AG04449 (cell line): ENCODE measurements at regions of chr4 and their contacts with region 1.

Region 1: GRCh38 chr4:94406668-94407437 is 44.9 kb upstream of the PDLIM5 start:
- DNase-seq: no peak
- H3K4me3 ChIP-seq: no peak overlapping the region
- CTCF ChIP-seq: peak; percentile 76

Region 2: GRCh38 chr4:94274912-94275311 is 131.9 kb before region 1 on chr4:
- CTCF ChIA-PET with region 1: no interaction called
- POLR2A ChIA-PET with region 1: no interaction called
- DNase-seq: peak; percentile 23
- H3K4me3 ChIP-seq: no peak overlapping the region
- CTCF ChIP-seq: no peak

Region 3: GRCh38 chr4:94325835-94326234 is 81.0 kb before region 1 on chr4:
- CTCF ChIA-PET with region 1: no interaction called
- POLR2A ChIA-PET with region 1: no interaction called
- DNase-seq: no peak
- H3K4me3 ChIP-seq: no peak overlapping the region
- CTCF ChIP-seq: no peak

Region 4: GRCh38 chr4:94378047-94378446 is 28.8 kb before region 1 on chr4:
- CTCF ChIA-PET with region 1: no interaction called
- POLR2A ChIA-PET with region 1: no interaction called
- DNase-seq: no peak
- H3K4me3 ChIP-seq: no peak overlapping the region
- CTCF ChIP-seq: no peak

Region 5: DNA sequence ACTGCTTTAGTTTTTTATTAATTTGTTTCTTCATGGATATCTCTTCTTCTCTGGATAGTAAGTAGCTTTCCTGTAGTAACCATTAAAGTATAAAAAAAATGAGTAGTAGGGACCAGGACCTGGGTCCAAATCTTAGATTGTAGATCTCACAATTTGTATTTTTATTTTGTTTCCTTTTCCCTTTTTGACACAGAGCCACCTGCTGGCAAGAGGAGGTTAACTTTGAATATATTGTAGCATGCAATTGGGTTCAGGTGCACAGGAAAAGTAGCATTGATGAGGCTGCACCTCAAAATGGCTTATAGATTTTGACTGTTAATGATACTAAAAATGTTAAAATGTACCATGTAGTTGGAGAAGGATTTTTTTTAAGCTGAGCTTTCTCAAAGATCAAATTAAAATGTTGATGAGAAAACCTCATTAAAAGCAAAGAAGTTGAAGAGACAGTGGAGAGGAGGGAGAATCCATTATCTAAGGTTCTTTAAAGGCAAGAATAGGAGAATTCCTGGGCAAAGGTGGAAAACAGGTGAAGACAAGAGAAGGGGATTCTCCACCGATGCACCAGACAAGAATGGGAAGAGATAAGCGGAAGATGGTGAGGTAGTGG is 15.9 kb before region 1 on chr4:
- CTCF ChIA-PET with region 1: interaction called, 19 read pairs
- POLR2A ChIA-PET with region 1: no interaction called
- DNase-seq: no peak
- H3K4me3 ChIP-seq: no peak overlapping the region
- CTCF ChIP-seq: peak; percentile 35

Region 6: GRCh38 chr4:94451695-94452475 is 45.0 kb after region 1 on chr4 and contains the start of gene PDLIM5:
- CTCF ChIA-PET with region 1: interaction called, 19 read pairs
- POLR2A ChIA-PET with region 1: interaction called, 3 read pairs
- DNase-seq: no peak
- H3K4me3 ChIP-seq: peak within 1 kb of the TSS; percentile 88
- CTCF ChIP-seq: no peak

Region 7: DNA sequence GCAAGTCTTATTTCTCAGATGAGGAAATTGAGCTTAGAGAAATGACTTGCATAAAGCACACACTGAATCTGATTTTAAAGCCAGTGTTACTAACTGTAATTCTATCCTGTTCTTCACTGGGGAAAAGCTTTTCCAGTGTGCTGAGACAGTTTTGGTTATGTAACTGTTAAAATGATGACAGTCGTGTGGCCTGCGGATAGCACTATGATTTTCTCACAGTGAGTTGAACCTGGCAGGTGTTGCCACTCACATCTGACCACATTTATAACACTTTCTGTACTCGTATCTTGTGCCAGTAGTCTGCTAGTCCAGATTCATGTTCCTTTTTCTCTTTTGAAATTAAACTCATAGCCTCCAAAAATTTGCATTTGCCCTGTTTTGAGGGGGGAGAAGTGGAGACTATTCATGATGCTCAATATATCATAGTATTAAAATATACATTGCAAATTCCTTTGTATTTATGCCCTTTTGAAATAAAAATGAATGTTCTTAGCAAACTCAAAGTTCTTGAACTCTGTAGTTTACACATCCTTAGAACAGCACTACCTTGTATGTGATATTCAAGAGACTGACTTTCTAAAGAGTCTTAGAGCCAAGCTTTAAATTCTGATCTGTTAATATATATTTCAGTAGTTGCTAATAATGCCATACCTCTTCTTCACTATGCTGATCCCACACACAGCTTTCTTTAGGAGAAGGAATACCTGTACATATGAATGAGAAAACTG is 177.2 kb after region 1 on chr4:
- CTCF ChIA-PET with region 1: interaction called, 19 read pairs
- POLR2A ChIA-PET with region 1: no interaction called
- DNase-seq: no peak
- H3K4me3 ChIP-seq: no peak overlapping the region
- CTCF ChIP-seq: no peak

Region 8: DNA sequence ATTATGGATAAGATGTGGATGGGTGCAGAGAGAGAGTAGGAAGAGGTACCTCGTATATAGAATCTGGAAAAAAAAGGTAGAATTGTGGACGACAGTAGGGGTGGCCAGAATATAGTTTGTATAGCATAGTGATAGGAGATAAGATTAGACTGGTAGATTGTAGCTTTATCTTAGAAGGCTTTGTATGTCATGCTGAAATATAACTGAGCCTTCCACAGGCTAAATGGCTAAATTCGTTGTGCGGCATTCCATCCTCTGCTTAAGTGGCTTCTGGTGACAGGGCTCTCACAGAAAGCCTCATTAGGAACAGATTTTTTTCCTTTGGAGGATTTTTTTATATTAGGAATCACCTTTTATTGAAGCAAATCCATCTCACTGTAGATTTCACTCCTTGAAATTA is 208.6 kb after region 1 on chr4:
- CTCF ChIA-PET with region 1: interaction called, 46 read pairs
- POLR2A ChIA-PET with region 1: no interaction called
- DNase-seq: no peak
- H3K4me3 ChIP-seq: no peak overlapping the region
- CTCF ChIP-seq: no peak